Dorsolateral prefrontal cortex (tissue), 120 donors: ENCODE measurements at regions of chr9 and their contacts with region 1.

Region 1: GRCh38 chr9:101601904-101602765 is 7.4 kb upstream of the PPP3R2 start:
- DNase-seq: peak in 2 of 10 donors; percentile 23 to 26
- H3K4me3 ChIP-seq: peak overlapping the region in 45 of 59 donors; percentile 7 to 58 (median 30)
- H3K27ac ChIP-seq: no peak overlapping the region
- H3K27me3 ChIP-seq: peaks cover 0 to 8% (median 0%) of the 10 kb centered on the region in 45 donors
- CTCF ChIP-seq: peak in 55 of 56 donors; percentile 56 to 85 (median 74)

Region 2: GRCh38 chr9:101705135-101705661 is 103.1 kb after region 1 on chr9:
- intact Hi-C with region 1: loop called in 1 of 2 experiments (anchors 10 kb)
- DNase-seq: peak in 7 of 10 donors; percentile 4 to 50 (median 28)
- H3K4me3 ChIP-seq: peak overlapping the region in 55 of 59 donors; percentile 11 to 63 (median 43)
- H3K27ac ChIP-seq: peak overlapping the region in 1 of 59 donors; percentile 36
- H3K27me3 ChIP-seq: peaks cover 0 to 14% (median 0%) of the 10 kb centered on the region in 45 donors
- CTCF ChIP-seq: peak in 15 of 56 donors; percentile 6 to 27 (median 15)